ENCODE measurements at regions of chr12 and their contacts with region 1.

Region 1: GRCh38 chr12:54028314-54029201 is at the start of gene HOXC6:
- DNase-seq: peak in 1 of 2 donors; percentile 50
- H3K4me3 ChIP-seq: peak within 1 kb of the TSS; percentile 15 to 35 (median 26)
- H3K27ac ChIP-seq: peak within 1 kb of the TSS in 1 of 5 donors; percentile 82
- H3K4me1 ChIP-seq: peaks cover 0 to 36% (median 18%) of the 10 kb centered on the region in 4 donors
- H3K27me3 ChIP-seq: peaks cover 3 to 100% (median 96%) of the 10 kb centered on the region in 3 donors
- CTCF ChIP-seq: no peak
- EP300 ChIP-seq: no peak
- POLR2A ChIP-seq: no peak
- total RNA-seq, gene HOXC6: 2.0 TPM in 1 of 5 donors, not detected in the others

Region 2: DNA sequence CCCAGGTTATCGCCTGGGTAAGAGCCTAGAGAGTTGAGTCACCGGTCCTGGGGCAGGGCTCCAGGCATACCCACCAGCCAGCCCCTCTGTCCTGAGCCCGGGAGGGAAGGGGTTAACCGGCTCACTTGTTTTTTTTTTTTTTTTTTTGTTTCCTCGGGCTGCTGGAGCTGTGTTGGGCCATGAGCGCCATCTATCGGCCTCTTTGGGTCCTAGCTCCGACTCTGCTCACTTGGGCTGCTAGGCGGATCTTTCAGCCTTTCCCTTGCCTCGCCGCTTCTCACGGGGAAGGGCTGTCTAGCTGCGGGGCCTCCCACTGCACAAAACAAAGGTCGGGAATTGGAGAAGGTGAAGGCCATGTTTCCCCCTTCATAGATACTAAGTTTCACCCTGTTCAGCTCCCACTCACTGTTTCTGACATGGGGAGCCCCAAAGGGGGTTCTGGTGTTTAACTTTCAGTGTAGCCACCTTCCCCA is 163.0 kb after region 1 on chr12:
- intact Hi-C with region 1: loop called (anchors 5 kb)
- DNase-seq: peak; percentile 87 to 96
- H3K4me3 ChIP-seq: no peak overlapping the region
- H3K27ac ChIP-seq: no peak overlapping the region
- H3K4me1 ChIP-seq: peaks cover 12 to 46% (median 29%) of the 10 kb centered on the region in 4 donors
- H3K27me3 ChIP-seq: peaks cover 0 to 49% (median 24%) of the 10 kb centered on the region in 3 donors
- CTCF ChIP-seq: peak in 5 of 7 experiments; percentile 70 to 92 (median 77)
- EP300 ChIP-seq: no peak
- POLR2A ChIP-seq: no peak